CD8-positive, alpha-beta T cell (primary cell): ENCODE measurements at regions of chr5 and their contacts with region 1.

Region 1: DNA sequence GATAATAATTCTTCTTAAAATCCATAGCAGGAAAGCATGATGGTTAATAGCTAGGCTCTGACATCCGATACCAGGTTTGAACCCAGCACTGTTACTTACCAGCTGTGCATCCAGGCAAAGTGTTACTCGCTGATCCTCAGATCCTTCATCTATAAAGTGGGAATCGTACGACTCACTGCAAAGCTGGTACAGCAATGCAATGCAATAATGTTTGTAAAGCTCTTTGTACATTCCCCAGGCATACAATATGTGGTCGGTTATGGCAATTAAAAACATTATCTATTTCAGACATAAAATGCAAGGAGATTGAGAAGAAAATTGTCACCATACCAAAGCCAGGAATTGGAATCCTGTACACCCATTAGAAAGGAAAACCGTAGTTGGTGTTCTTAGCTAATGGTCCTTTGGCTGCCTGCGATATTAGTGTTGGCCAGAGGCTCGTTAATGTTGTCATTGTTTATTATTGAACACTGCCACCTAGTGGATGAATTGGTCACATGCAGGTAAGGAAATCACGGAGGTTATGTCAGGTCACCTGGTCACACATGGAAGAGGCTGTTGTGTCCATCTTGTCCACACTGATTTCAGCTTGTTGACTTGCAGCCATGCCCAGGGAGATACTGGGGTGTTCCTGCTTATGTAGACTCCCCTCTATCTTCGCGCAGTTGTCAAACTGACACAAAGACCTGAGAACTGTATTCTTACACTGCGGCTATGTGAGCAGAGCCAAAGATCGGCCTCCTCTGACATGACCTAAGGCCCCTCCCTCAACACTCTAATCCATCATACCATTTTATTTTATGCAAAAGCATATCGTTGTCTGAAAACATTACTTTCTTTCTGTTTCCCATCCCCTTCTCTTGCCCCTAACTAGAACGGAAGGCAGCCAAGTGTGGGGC is 87.5 kb upstream of the PPP2R2B start:
- DNase-seq: peak; percentile 8 to 79 (median 36)
- ATAC-seq: peak; percentile 67
- H3K4me3 ChIP-seq: no peak overlapping the region
- H3K4me3 Mint-ChIP-seq: no peak overlapping the region
- H3K27ac ChIP-seq: no peak overlapping the region
- H3K27ac Mint-ChIP-seq: no peak overlapping the region
- H3K4me1 ChIP-seq: no peaks in the 10 kb centered on the region
- H3K4me1 Mint-ChIP-seq: no peaks in the 10 kb centered on the region
- H3K27me3 ChIP-seq: no peaks in the 10 kb centered on the region
- H3K27me3 Mint-ChIP-seq: no peaks in the 10 kb centered on the region
- CTCF ChIP-seq: peak; percentile 86

Region 2: DNA sequence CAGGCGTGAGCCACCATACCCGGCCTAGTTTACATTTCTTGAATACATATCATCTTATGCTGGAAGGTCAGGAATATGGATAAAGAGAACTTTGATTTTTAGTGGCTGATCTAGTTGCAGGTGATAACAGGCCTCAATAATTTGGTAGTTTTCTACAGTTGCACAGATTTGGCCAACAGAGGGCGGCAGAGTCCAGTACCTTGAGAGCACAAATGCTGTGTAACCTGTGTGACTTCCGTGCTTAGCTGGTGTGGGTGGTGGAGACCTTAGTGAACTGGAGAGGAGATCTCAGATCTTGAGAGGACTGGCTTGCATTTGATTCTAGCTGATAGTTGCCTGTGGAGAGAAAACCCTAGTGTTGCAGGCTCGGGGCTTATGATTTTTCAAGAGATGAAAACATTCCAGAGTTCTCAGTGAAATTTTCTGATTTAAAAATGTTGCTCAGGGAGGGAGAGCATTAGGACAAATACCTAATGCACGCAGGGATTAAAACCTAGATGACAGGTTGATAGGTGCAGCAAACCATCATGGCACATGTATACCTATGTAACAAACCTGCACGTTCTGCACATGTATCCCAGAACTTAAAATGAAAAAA is 432.7 kb before region 1 on chr5:
- CTCF ChIA-PET with region 1: interaction called, 56 read pairs
- POLR2A ChIA-PET with region 1: no interaction called
- intact Hi-C with region 1: loop called (anchors 1 to 2 kb)
- DNase-seq: peak; percentile 51 to 79 (median 71)
- ATAC-seq: peak; percentile 85
- H3K4me3 ChIP-seq: no peak overlapping the region
- H3K4me3 Mint-ChIP-seq: no peak overlapping the region
- H3K27ac ChIP-seq: no peak overlapping the region
- H3K27ac Mint-ChIP-seq: no peak overlapping the region
- H3K4me1 ChIP-seq: no peaks in the 10 kb centered on the region
- H3K4me1 Mint-ChIP-seq: peaks cover 3% of the 10 kb centered on the region
- H3K27me3 ChIP-seq: no peaks in the 10 kb centered on the region
- H3K27me3 Mint-ChIP-seq: peaks cover under 1% of the 10 kb centered on the region
- CTCF ChIP-seq: peak; percentile 70

Region 3: GRCh38 chr5:146548781-146549449 is 417.1 kb before region 1 on chr5:
- CTCF ChIA-PET with region 1: interaction called, 23 read pairs
- POLR2A ChIA-PET with region 1: no interaction called
- intact Hi-C with region 1: no loop called
- DNase-seq: no peak
- ATAC-seq: no peak
- H3K4me3 ChIP-seq: no peak overlapping the region
- H3K4me3 Mint-ChIP-seq: no peak overlapping the region
- H3K27ac ChIP-seq: no peak overlapping the region
- H3K27ac Mint-ChIP-seq: no peak overlapping the region
- H3K4me1 ChIP-seq: no peaks in the 10 kb centered on the region
- H3K4me1 Mint-ChIP-seq: no peaks in the 10 kb centered on the region
- H3K27me3 ChIP-seq: no peaks in the 10 kb centered on the region
- H3K27me3 Mint-ChIP-seq: peaks cover 10% of the 10 kb centered on the region
- CTCF ChIP-seq: no peak

Region 4: GRCh38 chr5:146662229-146662628 is 303.8 kb before region 1 on chr5:
- CTCF ChIA-PET with region 1: interaction called, 95 read pairs
- POLR2A ChIA-PET with region 1: no interaction called
- intact Hi-C with region 1: loop called (anchors 1 kb)
- DNase-seq: peak in 4 of 9 experiments; percentile 1 to 68 (median 36)
- ATAC-seq: no peak
- H3K4me3 ChIP-seq: no peak overlapping the region
- H3K4me3 Mint-ChIP-seq: no peak overlapping the region
- H3K27ac ChIP-seq: no peak overlapping the region
- H3K27ac Mint-ChIP-seq: no peak overlapping the region
- H3K4me1 ChIP-seq: no peaks in the 10 kb centered on the region
- H3K4me1 Mint-ChIP-seq: peaks cover 10% of the 10 kb centered on the region
- H3K27me3 ChIP-seq: no peaks in the 10 kb centered on the region
- H3K27me3 Mint-ChIP-seq: no peaks in the 10 kb centered on the region
- CTCF ChIP-seq: peak; percentile 66

Region 5: GRCh38 chr5:147188200-147189108 is 222.4 kb after region 1 on chr5:
- CTCF ChIA-PET with region 1: no interaction called
- POLR2A ChIA-PET with region 1: no interaction called
- intact Hi-C with region 1: loop called in 1 of 2 experiments (anchors 5 kb)
- DNase-seq: peak in 7 of 9 experiments; percentile 2 to 73 (median 33)
- ATAC-seq: peak; percentile 59
- H3K4me3 ChIP-seq: no peak overlapping the region
- H3K4me3 Mint-ChIP-seq: no peak overlapping the region
- H3K27ac ChIP-seq: no peak overlapping the region
- H3K27ac Mint-ChIP-seq: no peak overlapping the region
- H3K4me1 ChIP-seq: no peaks in the 10 kb centered on the region
- H3K4me1 Mint-ChIP-seq: peaks cover 6% of the 10 kb centered on the region
- H3K27me3 ChIP-seq: no peaks in the 10 kb centered on the region
- H3K27me3 Mint-ChIP-seq: peaks cover 10% of the 10 kb centered on the region
- CTCF ChIP-seq: peak; percentile 85